Gastrocnemius medialis (tissue), 4 donors: ENCODE measurements at regions of chr1 and their contacts with region 1.

Region 1: DNA sequence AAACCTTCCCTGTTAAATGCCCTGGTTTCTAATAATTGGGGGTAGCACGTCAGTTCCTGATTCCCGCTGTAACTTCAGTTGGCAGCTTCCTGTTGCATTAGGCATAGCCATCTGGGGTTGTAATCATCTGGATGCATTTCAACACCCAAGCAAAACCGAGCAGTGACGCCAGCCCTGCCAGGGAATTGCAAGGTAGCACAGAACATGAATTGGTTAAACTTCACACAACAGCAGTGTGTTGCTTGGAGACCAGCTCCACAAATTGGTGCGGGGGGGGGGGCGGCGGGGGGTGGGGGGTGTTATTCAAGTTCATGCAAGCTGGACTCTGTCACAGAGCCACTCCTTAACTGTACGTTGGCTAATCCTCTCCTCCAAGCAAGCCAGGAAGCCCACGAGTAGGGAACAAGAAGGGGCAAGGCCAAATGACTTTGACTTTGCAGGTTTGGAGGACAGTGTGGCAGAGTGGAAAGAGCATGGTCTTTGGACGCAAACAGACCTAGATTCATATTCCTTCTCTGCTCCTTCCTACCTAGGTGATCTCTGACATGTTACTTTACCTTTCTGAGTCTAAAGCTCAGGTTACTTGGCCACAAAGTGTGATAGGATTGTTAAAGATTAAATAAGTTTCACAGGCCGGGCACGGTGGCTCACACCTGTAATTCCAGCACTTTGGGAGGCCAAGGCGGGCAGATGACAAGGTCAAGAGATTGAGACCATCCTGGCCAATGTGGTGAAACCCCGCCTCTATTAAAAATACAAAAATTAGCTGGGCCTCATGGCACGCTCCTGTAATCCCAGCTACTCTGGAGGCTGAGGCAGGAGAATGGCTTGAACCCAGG is 4.7 kb downstream of the LAX1 start:
- DNase-seq: peak; percentile 53 to 80
- ATAC-seq: peak; percentile 52 to 67
- H3K4me3 ChIP-seq: peak overlapping the region; percentile 17 to 43 (median 24)
- H3K27ac ChIP-seq: peak overlapping the region; percentile 33 to 72 (median 67)
- H3K4me1 ChIP-seq: peaks cover 27 to 28% of the 10 kb centered on the region in 2 donors
- H3K27me3 ChIP-seq: no peaks in the 10 kb centered on the region
- CTCF ChIP-seq: no peak
- POLR2A ChIP-seq: no peak

Region 2: DNA sequence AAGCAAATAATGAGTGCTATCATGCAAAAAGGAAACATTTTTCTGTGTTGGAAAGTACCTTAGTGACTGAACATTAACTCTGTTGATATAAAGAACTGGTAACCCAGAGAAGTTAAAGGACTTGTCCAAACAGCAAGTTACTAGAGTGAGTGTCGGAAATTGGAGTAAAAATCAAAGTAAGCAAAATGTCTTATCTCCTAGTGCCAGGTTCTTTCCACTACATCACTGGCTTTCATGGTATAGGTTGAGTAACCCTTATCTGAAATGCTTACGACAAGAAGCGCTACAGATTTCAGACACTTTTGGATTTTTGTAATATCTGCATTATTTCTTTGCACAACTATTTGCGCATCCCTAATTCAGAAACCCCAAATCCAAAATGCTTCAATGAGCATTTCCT is 864.4 kb before region 1 on chr1:
- in situ Hi-C with region 1: no loop called
- intact Hi-C with region 1: no loop called
- DNase-seq: no peak
- ATAC-seq: no peak
- H3K4me3 ChIP-seq: no peak overlapping the region
- H3K27ac ChIP-seq: no peak overlapping the region
- H3K4me1 ChIP-seq: no peaks in the 10 kb centered on the region
- H3K27me3 ChIP-seq: no peaks in the 10 kb centered on the region
- CTCF ChIP-seq: no peak
- POLR2A ChIP-seq: no peak

Region 3: DNA sequence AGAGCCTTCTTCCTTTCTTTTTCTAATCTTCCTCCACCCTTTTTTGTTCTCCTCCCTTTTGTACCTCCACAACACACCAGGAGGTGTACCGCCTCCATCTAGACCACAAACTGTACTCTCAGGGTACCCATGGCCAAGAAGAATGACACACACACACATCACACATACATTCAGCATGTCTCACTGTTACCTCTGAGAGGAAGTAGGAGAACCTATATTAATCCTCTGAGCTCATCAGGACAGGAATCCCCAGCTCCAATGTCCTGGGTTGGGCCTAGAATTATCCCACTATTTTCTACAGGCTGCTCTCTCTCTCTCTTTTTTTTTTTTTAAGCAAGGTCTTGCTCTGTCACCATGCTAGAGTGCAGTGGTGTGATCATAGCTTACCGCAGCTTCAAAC is 106.4 kb before region 1 on chr1:
- in situ Hi-C with region 1: no loop called
- intact Hi-C with region 1: loop called (anchors 10 kb)
- DNase-seq: peak; percentile 32 to 53
- ATAC-seq: peak; percentile 97 to 98
- H3K4me3 ChIP-seq: no peak overlapping the region
- H3K27ac ChIP-seq: peak overlapping the region; percentile 65 to 76 (median 72)
- H3K4me1 ChIP-seq: peaks cover 51 to 52% of the 10 kb centered on the region in 2 donors
- H3K27me3 ChIP-seq: no peaks in the 10 kb centered on the region
- CTCF ChIP-seq: peak in 1 of 5 experiments; percentile 11
- POLR2A ChIP-seq: no peak

Region 4: DNA sequence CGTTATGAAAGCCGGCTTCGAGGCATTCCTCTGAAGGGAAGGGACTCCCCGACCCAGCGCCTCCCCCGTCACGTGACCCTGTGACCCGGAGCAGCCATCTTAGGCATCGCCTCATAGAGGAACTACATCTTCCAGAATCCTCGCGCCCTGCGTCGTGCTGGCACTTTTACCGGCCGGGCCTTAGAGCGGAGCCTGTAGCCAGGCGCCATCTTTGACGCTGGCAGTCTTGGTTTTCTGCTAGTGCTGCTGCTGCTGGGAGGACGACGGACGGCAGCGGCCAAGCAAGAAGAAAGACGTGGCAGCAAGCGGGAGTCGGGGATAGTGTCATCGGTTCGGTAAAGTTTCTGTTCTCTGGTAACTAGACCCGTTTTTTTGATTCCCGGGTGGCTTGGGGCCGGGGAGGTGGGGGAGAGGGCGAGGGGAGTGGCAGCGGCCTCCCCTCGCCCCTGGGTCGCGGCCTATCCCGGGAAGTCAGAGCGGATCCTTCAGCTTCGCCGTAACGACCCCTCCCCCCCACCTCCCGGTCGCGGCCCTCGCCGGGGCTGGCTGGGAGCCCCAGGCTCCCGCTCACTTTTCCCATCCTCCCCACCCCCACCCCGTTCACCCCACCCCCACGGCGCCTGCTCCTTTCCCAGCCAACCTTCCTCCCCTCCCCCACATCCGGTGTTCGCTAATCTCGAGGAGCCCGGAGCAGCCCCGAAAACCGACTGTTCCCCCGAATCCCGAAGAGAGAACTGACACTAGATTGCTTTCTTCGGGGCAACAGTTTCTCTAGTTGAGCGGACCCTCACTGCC is 25.9 kb after region 1 on chr1 and contains the starts of genes ZBED6 and ZC3H11A:
- in situ Hi-C with region 1: no loop called
- intact Hi-C with region 1: loop called (anchors 2 kb)
- DNase-seq: peak; percentile 99
- ATAC-seq: peak; percentile 93 to 95
- H3K4me3 ChIP-seq: peak within 1 kb of the TSS; percentile 75 to 91 (median 86)
- H3K27ac ChIP-seq: peak within 1 kb of the TSS; percentile 98 to 99 (median 98)
- H3K4me1 ChIP-seq: peaks cover 41 to 47% of the 10 kb centered on the region in 2 donors
- H3K27me3 ChIP-seq: no peaks in the 10 kb centered on the region
- CTCF ChIP-seq: peak in 1 of 5 experiments; percentile 27
- POLR2A ChIP-seq: peak; percentile 82 to 94
- total RNA-seq, gene ZBED6: 9.0 to 42.5 (median 27.6) TPM
- total RNA-seq, gene ZC3H11A: 71.0 to 131 (median 92.0) TPM

Region 5: DNA sequence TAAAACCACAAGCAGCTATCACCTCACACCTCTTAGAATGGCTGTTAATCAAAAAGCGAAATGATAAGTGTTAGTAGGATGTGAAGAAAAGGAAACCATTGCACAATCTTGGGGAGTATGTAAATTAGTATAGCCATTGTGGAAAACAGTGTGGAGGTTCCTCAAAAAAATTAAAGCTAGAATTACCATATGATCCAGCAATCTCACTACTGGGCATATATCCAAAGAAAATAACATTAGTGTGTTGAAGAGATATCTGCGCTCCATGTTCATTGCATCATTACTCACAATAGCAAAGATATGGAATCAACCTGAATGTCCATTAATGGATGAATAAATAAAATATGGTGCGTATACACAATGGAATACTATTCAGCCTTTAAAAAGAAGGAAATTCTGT is 160.6 kb after region 1 on chr1:
- in situ Hi-C with region 1: no loop called
- intact Hi-C with region 1: no loop called
- DNase-seq: no peak
- ATAC-seq: no peak
- H3K4me3 ChIP-seq: no peak overlapping the region
- H3K27ac ChIP-seq: no peak overlapping the region
- H3K4me1 ChIP-seq: no peaks in the 10 kb centered on the region
- H3K27me3 ChIP-seq: no peaks in the 10 kb centered on the region
- CTCF ChIP-seq: no peak
- POLR2A ChIP-seq: no peak